AG04449 (cell line): ENCODE measurements at regions of chr12 and their contacts with region 1.

Region 1: DNA sequence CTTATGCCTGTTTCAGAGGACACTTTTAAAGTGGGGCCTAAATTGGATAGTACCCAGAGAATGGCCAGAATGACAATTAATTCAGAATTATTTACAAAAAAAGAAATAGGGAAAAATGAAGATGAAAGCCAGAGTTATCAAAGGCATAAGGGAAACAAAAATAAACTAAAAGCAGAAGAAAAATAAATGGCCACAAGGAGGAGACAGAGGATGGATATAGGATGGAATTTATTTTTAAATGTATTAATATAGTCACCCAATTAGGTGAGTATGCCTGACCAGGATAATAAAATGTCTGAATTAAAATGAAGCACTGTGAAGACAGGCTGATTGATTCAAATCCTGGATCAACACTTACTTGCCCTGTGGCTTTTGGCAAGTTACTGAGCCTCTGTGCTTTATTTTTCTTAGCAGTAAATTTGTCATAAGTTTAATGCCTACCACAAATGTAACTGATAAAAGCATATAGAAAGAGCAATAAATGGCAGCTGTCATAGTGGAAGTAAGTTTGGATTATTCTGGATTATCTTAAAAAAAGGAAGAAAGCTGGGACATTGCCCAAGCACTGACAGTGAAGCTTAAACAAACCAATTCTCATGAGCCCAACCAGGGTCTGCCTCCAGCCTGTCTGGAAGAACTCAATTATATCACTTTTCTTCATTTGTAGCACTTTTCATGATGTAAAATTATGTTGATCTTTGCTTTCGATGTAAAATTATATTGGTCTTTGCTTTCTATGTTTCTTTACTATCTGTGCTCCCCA is 3.5 kb downstream of the CLEC9A start:
- DNase-seq: no peak
- H3K4me3 ChIP-seq: no peak overlapping the region
- CTCF ChIP-seq: peak; percentile 26

Region 2: DNA sequence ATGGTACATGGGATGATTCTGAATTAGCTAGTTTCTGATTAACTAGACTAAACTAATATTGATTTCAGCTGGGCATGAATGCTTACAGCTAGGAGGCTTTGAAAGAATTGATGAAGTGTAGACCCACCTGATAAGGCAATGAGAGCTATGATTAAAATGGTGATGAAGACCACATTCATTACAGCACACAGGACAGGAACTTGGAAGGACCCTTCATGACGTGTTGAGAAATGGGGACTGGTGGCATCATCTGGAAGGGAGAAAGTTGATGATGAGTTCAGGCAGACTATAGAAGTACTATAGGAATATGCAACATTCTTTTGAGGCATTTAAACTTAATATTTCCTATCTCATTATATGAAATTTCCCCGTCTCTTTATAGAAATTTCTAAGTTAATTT is 277.8 kb before region 1 on chr12:
- CTCF ChIA-PET with region 1: no interaction called
- POLR2A ChIA-PET with region 1: no interaction called
- DNase-seq: no peak
- H3K4me3 ChIP-seq: no peak overlapping the region
- CTCF ChIP-seq: no peak

Region 3: GRCh38 chr12:10140001-10140400 is 106.0 kb after region 1 on chr12:
- CTCF ChIA-PET with region 1: interaction called, 28 read pairs
- POLR2A ChIA-PET with region 1: no interaction called
- DNase-seq: no peak
- H3K4me3 ChIP-seq: no peak overlapping the region
- CTCF ChIP-seq: peak; percentile 39